CD8-positive, alpha-beta T cell (primary cell): ENCODE measurements at regions of chr14 and their contacts with region 1.

Region 1: GRCh38 chr14:77208291-77208969 is 26.8 kb downstream of the TMEM63C start:
- DNase-seq: peak in 8 of 9 experiments; percentile 4 to 75 (median 54)
- ATAC-seq: no peak
- H3K4me3 ChIP-seq: no peak overlapping the region
- H3K4me3 Mint-ChIP-seq: no peak overlapping the region
- H3K27ac ChIP-seq: no peak overlapping the region
- H3K27ac Mint-ChIP-seq: no peak overlapping the region
- H3K4me1 ChIP-seq: no peaks in the 10 kb centered on the region
- H3K4me1 Mint-ChIP-seq: no peaks in the 10 kb centered on the region
- H3K27me3 ChIP-seq: no peaks in the 10 kb centered on the region
- H3K27me3 Mint-ChIP-seq: peaks cover 13% of the 10 kb centered on the region
- CTCF ChIP-seq: no peak

Region 2: DNA sequence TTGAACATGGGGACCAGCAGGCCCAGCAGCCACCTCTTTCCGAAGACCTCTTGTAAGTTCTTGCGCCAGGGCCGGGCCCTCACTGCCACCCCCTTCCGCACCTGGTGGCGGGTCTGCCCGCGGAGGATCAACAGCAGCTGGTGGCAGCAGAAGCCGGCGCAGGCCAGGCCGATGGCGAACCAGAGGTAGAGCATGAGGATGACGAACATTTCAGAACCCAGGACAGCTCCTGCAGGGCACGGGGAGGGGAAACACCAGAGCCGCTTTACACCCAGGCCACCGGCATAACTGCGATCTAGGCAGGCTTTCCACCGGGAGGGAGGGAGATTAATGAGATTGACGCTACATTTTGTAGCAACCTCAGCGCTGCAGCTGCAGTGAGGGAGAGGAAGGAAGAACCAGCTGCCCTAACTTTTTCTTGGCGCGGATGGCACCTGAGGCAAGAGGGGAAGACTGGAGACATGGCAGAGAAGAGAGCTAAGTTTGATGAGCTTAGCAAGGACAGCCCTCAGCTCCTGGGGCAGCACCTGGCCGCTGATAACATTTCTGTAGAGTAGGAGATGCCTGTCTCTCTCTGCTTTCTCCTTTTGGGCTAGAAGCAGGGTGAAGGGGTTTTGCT is 74.6 kb before region 1 on chr14:
- CTCF ChIA-PET with region 1: no interaction called
- POLR2A ChIA-PET with region 1: no interaction called
- intact Hi-C with region 1: loop called in 1 of 2 experiments (anchors 2 kb)
- DNase-seq: peak in 7 of 9 experiments; percentile 18 to 68 (median 60)
- ATAC-seq: peak; percentile 95
- H3K4me3 ChIP-seq: no peak overlapping the region
- H3K4me3 Mint-ChIP-seq: no peak overlapping the region
- H3K27ac ChIP-seq: no peak overlapping the region
- H3K27ac Mint-ChIP-seq: no peak overlapping the region
- H3K4me1 ChIP-seq: no peaks in the 10 kb centered on the region
- H3K4me1 Mint-ChIP-seq: peaks cover 6% of the 10 kb centered on the region
- H3K27me3 ChIP-seq: peaks cover 5 to 19% of the 10 kb centered on the region in 2 experiments
- H3K27me3 Mint-ChIP-seq: peaks cover 67% of the 10 kb centered on the region
- CTCF ChIP-seq: no peak